GM12878 (cell line): ENCODE measurements at regions of chr20 and their contacts with region 1.

Region 1: GRCh38 chr20:58650776-58651558 is at the start of gene STX16:
- DNase-seq: peak; percentile 80
- ATAC-seq: peak; percentile 82
- H3K4me3 ChIP-seq: peak within 1 kb of the TSS; percentile 92
- H3K27ac ChIP-seq: peak within 1 kb of the TSS; percentile 93
- H3K4me1 ChIP-seq: peaks cover 3% of the 10 kb centered on the region
- H3K27me3 ChIP-seq: no peaks in the 10 kb centered on the region
- CTCF ChIP-seq: peak; percentile 22 to 60 (median 44); a peak in 4 of 6 replicates
- EP300 ChIP-seq: peak; percentile 56 to 61; a peak in 2 of 4 replicates
- POLR2A ChIP-seq: peak; percentile 93
- RAD21 ChIP-seq: peak; percentile 25
- polyA plus RNA-seq, gene STX16: 6.3 to 11.1 TPM

Region 2: GRCh38 chr20:57391074-57391554 is 1259.9 kb before region 1 on chr20 and contains the start of gene RBM38:
- CTCF ChIA-PET with region 1: no interaction called
- POLR2A ChIA-PET with region 1: no interaction called
- RAD21 ChIA-PET with region 1: no interaction called
- SMC1A ChIA-PET with region 1: no interaction called
- in situ Hi-C with region 1: loop called (anchors 25 kb)
- intact Hi-C with region 1: no loop called
- DNase-seq: no peak
- ATAC-seq: peak; percentile 48
- H3K4me3 ChIP-seq: peak within 1 kb of the TSS; percentile 94
- H3K27ac ChIP-seq: peak within 1 kb of the TSS; percentile 97
- H3K4me1 ChIP-seq: peaks cover 37% of the 10 kb centered on the region
- H3K27me3 ChIP-seq: no peaks in the 10 kb centered on the region
- CTCF ChIP-seq: no peak
- EP300 ChIP-seq: no peak
- POLR2A ChIP-seq: peak; percentile 55
- RAD21 ChIP-seq: no peak
- polyA plus RNA-seq, gene RBM38: 0.32 to 1.3 TPM

Region 3: DNA sequence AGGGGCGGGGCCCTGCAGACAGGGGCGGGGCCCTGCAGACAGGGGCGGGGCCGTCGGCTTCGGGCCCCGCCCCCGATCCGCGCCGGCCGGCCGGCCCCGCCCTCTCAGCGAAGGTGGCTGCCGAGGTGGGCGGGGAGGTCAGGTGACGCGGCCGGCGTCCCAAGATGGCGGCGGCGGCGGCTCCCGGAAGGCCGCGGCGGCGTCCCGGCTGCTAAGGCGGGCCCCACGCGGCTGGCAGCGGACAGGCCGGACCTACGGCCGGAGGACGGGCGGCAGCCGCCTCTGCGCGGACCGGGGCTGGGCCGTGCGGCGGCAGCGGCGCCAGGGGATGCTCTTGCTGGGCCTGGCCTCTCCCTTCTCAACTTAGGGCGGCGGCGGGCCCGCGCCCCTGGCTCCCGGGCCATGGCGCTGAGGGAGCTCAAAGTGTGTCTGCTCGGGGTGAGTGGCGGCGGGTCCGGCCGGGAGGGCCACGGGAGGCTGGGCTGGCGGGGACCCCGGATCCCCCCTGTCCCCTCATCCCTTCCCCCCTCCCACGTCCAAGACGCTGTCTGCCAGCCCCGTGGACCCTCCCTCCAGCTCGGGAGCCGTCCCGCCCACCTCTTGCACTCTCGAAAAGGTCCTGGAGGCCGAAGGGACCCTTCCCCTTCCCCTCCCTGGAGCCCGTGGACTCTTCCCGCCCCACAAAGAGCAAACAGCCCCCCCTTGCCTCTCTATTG is 341.2 kb before region 1 on chr20 and contains the start of gene RAB22A:
- CTCF ChIA-PET with region 1: no interaction called
- POLR2A ChIA-PET with region 1: interaction called, 5 read pairs
- RAD21 ChIA-PET with region 1: no interaction called
- SMC1A ChIA-PET with region 1: interaction called, 3 read pairs
- in situ Hi-C with region 1: no loop called
- intact Hi-C with region 1: loop called (anchors 10 kb)
- DNase-seq: no peak
- ATAC-seq: peak; percentile 73
- H3K4me3 ChIP-seq: peak within 1 kb of the TSS; percentile 100
- H3K27ac ChIP-seq: peak within 1 kb of the TSS; percentile 65
- H3K4me1 ChIP-seq: peaks cover 16% of the 10 kb centered on the region; the same call in 1 of the 2 replicates
- H3K27me3 ChIP-seq: no peaks in the 10 kb centered on the region
- CTCF ChIP-seq: no peak
- EP300 ChIP-seq: no peak
- POLR2A ChIP-seq: peak; percentile 96
- RAD21 ChIP-seq: no peak
- polyA plus RNA-seq, gene RAB22A: 2.7 to 3.7 TPM

Region 4: DNA sequence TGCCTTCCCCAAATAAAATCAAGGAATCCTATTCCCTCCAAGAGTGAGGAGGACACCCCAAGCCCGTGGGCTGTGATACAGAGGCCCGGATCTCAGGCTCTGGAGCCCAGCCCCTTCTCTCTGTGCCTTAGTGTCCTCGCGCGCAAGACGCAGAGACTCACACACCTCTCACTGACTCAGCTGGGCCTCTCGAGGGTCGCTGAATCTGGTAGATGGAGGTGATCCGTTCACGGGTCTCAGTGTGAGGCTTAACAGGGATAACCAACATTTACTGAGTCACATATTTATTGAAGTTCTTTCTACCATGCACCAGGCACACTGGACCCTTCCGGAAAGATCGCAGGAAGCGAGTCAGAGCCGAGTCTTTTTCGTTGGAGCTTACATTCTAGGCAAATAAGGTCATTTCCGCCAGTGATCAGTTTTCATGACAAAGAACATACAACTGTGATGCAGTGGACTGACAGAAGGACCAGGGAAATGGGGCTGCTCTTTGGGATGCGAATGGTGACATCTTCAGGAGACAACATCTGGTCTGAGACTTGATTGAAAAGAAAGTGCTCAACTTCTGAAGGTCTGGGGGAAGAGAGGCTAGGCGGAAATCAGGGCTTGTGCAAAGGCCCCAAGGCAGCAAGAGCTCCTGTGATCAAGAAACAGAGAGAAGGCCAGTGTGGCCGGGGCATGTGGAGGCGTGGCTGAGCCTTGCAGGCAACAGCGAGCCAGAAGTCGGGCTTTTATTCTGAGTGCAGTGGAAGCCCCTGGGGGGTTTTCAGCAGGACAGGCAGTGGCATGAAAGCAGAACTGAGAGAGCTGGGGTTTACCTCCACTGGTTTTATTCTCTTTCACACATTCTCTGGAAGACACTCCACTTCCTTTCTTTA is 192.5 kb before region 1 on chr20:
- CTCF ChIA-PET with region 1: no interaction called
- POLR2A ChIA-PET with region 1: interaction called, 9 read pairs
- RAD21 ChIA-PET with region 1: interaction called, 7 read pairs
- SMC1A ChIA-PET with region 1: interaction called, 3 read pairs
- in situ Hi-C with region 1: loop called (anchors 25 kb)
- intact Hi-C with region 1: loop called (anchors 2 kb)
- DNase-seq: peak; percentile 89
- ATAC-seq: peak; percentile 99
- H3K4me3 ChIP-seq: peak overlapping the region; percentile 32
- H3K27ac ChIP-seq: peak overlapping the region; percentile 49
- H3K4me1 ChIP-seq: peaks cover 29% of the 10 kb centered on the region
- H3K27me3 ChIP-seq: no peaks in the 10 kb centered on the region
- CTCF ChIP-seq: no peak
- EP300 ChIP-seq: peak; percentile 90 to 95
- POLR2A ChIP-seq: no peak
- RAD21 ChIP-seq: no peak

Region 5: DNA sequence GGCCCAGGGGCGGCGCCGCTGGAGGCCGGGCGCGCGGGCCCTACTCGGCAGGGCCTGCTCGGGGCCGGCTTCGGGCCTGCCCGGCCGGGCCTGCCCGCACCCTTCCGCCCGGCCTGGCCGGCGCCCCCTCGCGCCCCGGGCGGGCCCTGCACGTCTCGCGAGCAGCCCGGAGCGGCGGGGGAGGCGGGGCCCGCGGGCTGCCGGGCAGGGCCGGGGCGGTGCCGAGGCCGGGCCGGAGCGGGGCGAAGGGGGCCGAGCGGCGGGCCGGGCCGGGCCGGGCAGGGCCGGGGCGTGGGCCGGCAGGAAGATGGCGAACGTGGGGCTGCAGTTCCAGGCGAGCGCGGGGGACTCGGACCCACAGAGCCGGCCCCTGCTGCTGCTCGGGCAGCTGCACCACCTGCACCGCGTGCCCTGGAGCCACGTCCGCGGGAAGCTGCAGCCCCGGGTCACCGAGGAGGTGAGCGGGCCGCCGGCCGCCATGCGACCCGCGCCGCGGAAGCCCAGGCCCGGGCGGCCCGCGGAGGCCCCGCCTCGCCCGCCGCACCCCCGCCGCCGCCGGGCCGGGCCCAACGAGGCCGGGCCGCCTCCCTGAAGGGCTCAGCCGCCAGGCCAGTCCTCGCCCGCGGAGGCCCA is 41.7 kb after region 1 on chr20 and contains the start of gene NPEPL1:
- CTCF ChIA-PET with region 1: interaction called, 4 read pairs
- POLR2A ChIA-PET with region 1: no interaction called
- RAD21 ChIA-PET with region 1: interaction called, 3 read pairs
- SMC1A ChIA-PET with region 1: no interaction called
- in situ Hi-C with region 1: no loop called
- intact Hi-C with region 1: loop called (anchors 5 kb)
- DNase-seq: no peak
- ATAC-seq: peak; percentile 97
- H3K4me3 ChIP-seq: peak within 1 kb of the TSS; percentile 75
- H3K27ac ChIP-seq: 0 out of 2 replicates have a peak within 1 kb of the TSS, but pooled peaks have one; percentile 25
- H3K4me1 ChIP-seq: peaks cover 5% of the 10 kb centered on the region
- H3K27me3 ChIP-seq: no peaks in the 10 kb centered on the region
- CTCF ChIP-seq: peak in 2 of 3 experiments; percentile 36 to 49; a peak in 3 of 6 replicates
- EP300 ChIP-seq: no peak
- POLR2A ChIP-seq: 0 out of 2 replicates have a peak, but pooled peaks have one; percentile 58
- RAD21 ChIP-seq: peak; percentile 44
- polyA plus RNA-seq, gene NPEPL1: 0.08 to 0.80 TPM

Region 6: GRCh38 chr20:58980700-58981627 is 330.0 kb after region 1 on chr20 and contains the start of gene NELFCD:
- CTCF ChIA-PET with region 1: no interaction called
- POLR2A ChIA-PET with region 1: no interaction called
- RAD21 ChIA-PET with region 1: interaction called, 5 read pairs
- SMC1A ChIA-PET with region 1: no interaction called
- in situ Hi-C with region 1: no loop called
- intact Hi-C with region 1: loop called (anchors 10 kb)
- DNase-seq: no peak
- ATAC-seq: peak; percentile 68
- H3K4me3 ChIP-seq: peak within 1 kb of the TSS; percentile 99
- H3K27ac ChIP-seq: peak within 1 kb of the TSS; percentile 87
- H3K4me1 ChIP-seq: peaks cover 38% of the 10 kb centered on the region
- H3K27me3 ChIP-seq: no peaks in the 10 kb centered on the region
- CTCF ChIP-seq: no peak
- EP300 ChIP-seq: no peak
- POLR2A ChIP-seq: peak; percentile 91
- RAD21 ChIP-seq: no peak
- polyA plus RNA-seq, gene NELFCD: 8.9 to 16.7 TPM

Region 7: DNA sequence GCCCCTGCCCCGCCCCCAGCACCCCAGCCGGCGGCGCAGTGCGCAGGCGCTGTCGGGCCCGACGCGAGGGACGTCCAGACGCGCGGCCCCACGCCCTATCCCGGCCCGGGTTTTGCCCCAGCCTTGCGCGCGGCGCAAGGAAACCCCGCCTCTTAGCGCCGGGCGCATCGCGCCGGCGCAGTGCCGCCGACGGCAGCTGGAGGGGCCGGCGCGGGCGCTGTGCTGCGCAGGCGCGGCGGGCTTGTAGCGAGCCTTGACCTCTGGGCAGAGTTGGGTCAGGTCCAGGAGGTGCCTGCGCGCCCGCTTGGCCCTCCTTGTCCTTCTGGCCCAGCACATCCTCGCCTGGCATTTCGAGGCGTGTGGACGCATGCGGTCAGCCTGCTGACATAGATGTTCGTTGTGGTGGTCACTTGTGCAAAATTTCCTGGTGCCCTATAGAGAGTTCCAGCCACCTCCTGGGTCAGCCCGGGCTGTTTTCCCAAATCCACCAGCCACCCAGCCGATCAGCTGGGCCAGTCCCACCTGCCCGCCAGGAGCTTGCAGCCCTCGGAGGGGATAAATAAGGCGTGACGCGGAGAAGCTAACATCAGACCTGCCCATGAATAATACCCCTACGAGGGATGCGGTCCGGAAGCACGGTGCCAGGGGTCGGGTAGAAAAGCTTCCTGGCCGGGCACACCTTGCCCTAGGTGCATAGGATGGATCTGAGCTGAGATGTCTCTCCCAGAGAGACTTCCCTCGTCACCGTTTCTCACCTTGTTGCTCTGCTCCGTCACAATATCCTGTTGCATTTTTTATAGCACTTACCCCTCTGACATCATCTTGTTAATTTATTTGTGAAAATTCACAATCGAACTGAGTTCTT is 392.1 kb after region 1 on chr20:
- CTCF ChIA-PET with region 1: no interaction called
- POLR2A ChIA-PET with region 1: no interaction called
- RAD21 ChIA-PET with region 1: no interaction called
- SMC1A ChIA-PET with region 1: no interaction called
- in situ Hi-C with region 1: loop called (anchors 10 kb)
- intact Hi-C with region 1: loop called (anchors 10 kb)
- DNase-seq: peak; percentile 61
- ATAC-seq: peak; percentile 96
- H3K4me3 ChIP-seq: peak overlapping the region; percentile 89
- H3K27ac ChIP-seq: peak overlapping the region; percentile 87
- H3K4me1 ChIP-seq: peaks cover 13% of the 10 kb centered on the region
- H3K27me3 ChIP-seq: no peaks in the 10 kb centered on the region
- CTCF ChIP-seq: no peak
- EP300 ChIP-seq: no peak
- POLR2A ChIP-seq: peak; percentile 78
- RAD21 ChIP-seq: no peak